Thyroid gland (tissue), 4 donors: ENCODE measurements at regions of chr4 and their contacts with region 1.

Region 1: GRCh38 chr4:17544831-17545234 is 29.9 kb downstream of the CLRN2 start:
- DNase-seq: no peak
- H3K4me3 ChIP-seq: no peak overlapping the region
- H3K27ac ChIP-seq: no peak overlapping the region
- H3K4me1 ChIP-seq: peaks cover 0 to 2% of the 10 kb centered on the region in 2 donors
- H3K27me3 ChIP-seq: peaks cover 4% of the 10 kb centered on the region
- CTCF ChIP-seq: no peak
- POLR2A ChIP-seq: no peak

Region 2: GRCh38 chr4:17511950-17512795 is 32.7 kb before region 1 on chr4 and contains the start of gene QDPR:
- intact Hi-C with region 1: no loop called
- DNase-seq: peak; percentile 87 to 89
- H3K4me3 ChIP-seq: peak within 1 kb of the TSS; percentile 23 to 79 (median 69)
- H3K27ac ChIP-seq: peak within 1 kb of the TSS; percentile 18 to 82 (median 52)
- H3K4me1 ChIP-seq: peaks cover 12 to 23% of the 10 kb centered on the region in 2 donors
- H3K27me3 ChIP-seq: no peaks in the 10 kb centered on the region
- CTCF ChIP-seq: peak in 3 of 6 experiments; percentile 49 to 62 (median 52)
- POLR2A ChIP-seq: peak in 1 of 2 donors; percentile 50
- total RNA-seq, gene QDPR: 4.0 to 14.7 (median 9.6) TPM

Region 3: GRCh38 chr4:18593445-18594002 is 1048.7 kb after region 1 on chr4:
- intact Hi-C with region 1: loop called (anchors 5 kb)
- DNase-seq: peak; percentile 33 to 46
- H3K4me3 ChIP-seq: no peak overlapping the region
- H3K27ac ChIP-seq: no peak overlapping the region
- H3K4me1 ChIP-seq: no peaks in the 10 kb centered on the region
- H3K27me3 ChIP-seq: no peaks in the 10 kb centered on the region
- CTCF ChIP-seq: peak in 5 of 6 experiments; percentile 57 to 87 (median 71)
- POLR2A ChIP-seq: no peak